ENCODE measurements at regions of chr4 and their contacts with region 1.

Region 1: DNA sequence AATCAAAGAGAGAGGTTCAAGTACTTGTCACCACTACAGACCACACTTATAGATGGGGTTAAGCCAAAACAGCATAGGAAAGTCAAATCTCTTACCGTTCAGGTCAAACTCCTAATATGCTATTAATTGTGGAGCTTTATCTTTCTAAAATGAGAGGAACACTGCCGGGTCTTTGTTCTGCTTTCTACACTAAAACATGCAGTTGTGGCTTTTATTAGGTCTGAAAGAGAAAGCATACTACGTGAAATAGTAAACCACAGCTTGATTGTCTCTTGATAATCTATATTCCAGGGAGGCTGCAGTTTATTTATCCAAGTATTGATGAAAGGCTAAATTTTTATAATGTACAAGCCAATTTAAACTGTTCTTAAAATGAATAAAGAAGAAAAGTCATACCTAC is 12.3 kb upstream of the INPP4B start:
- DNase-seq: peak in 2 of 3 donors; percentile 61 to 71
- H3K4me3 ChIP-seq: peak overlapping the region in 2 of 7 experiments; percentile 26 to 40
- H3K27ac ChIP-seq: no peak overlapping the region
- H3K4me1 ChIP-seq: peaks cover 0 to 22% (median 6%) of the 10 kb centered on the region in 4 experiments
- H3K27me3 ChIP-seq: no peaks in the 10 kb centered on the region

Region 2: GRCh38 chr4:142832022-142832421 is 26.4 kb before region 1 on chr4:
- CTCF ChIA-PET with region 1: no interaction called
- POLR2A ChIA-PET with region 1: no interaction called
- DNase-seq: peak in 2 of 3 donors; percentile 60 to 73
- H3K4me3 ChIP-seq: peak overlapping the region in 4 of 7 experiments; percentile 2 to 58 (median 40)
- H3K27ac ChIP-seq: peak overlapping the region; percentile 34 to 66
- H3K4me1 ChIP-seq: peaks cover 3 to 27% (median 9%) of the 10 kb centered on the region in 4 experiments
- H3K27me3 ChIP-seq: no peaks in the 10 kb centered on the region

Region 3: GRCh38 chr4:142846729-142847596 is 11.5 kb before region 1 on chr4:
- CTCF ChIA-PET with region 1: interaction called, 11 read pairs
- POLR2A ChIA-PET with region 1: no interaction called
- DNase-seq: peak; percentile 74 to 86 (median 84)
- H3K4me3 ChIP-seq: peak overlapping the region; percentile 83 to 98 (median 94)
- H3K27ac ChIP-seq: peak overlapping the region in 1 of 2 experiments; percentile 75
- H3K4me1 ChIP-seq: peaks cover 3 to 37% (median 20%) of the 10 kb centered on the region in 4 experiments
- H3K27me3 ChIP-seq: no peaks in the 10 kb centered on the region